Colonic mucosa (tissue), 4 donors: ENCODE measurements at regions of chr16 and their contacts with region 1.

Region 1: DNA sequence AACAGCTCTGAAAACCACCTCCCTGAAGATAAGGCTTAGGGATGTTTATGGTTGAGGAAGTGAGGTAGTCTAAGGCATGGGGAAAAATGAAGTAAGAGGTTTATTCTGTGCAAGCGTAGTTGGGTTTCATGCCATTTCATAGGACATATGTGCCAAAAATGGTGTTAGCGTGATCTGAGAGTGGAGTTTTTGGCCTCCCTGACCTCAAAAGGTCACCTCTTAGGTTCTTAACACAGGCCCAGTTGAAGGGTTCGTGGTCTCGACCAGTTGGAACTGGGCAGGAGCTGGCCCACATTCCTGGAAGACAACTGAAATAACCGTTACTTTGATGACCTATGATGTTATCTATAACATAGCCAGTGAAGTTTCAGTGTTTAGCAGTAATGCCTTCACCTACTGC is 57.0 kb downstream of the MRTFB start:
- DNase-seq: no peak
- H3K4me3 ChIP-seq: no peak overlapping the region
- H3K27ac ChIP-seq: no peak overlapping the region
- H3K4me1 ChIP-seq: no peaks in the 10 kb centered on the region
- H3K27me3 ChIP-seq: no peaks in the 10 kb centered on the region
- CTCF ChIP-seq: no peak

Region 2: GRCh38 chr16:14111713-14112540 is 16.2 kb before region 1 on chr16:
- intact Hi-C with region 1: loop called (anchors 2 kb)
- DNase-seq: peak; percentile 79
- H3K4me3 ChIP-seq: no peak overlapping the region
- H3K27ac ChIP-seq: peak overlapping the region; percentile 5
- H3K4me1 ChIP-seq: peaks cover 7% of the 10 kb centered on the region
- H3K27me3 ChIP-seq: no peaks in the 10 kb centered on the region
- CTCF ChIP-seq: no peak

Region 3: DNA sequence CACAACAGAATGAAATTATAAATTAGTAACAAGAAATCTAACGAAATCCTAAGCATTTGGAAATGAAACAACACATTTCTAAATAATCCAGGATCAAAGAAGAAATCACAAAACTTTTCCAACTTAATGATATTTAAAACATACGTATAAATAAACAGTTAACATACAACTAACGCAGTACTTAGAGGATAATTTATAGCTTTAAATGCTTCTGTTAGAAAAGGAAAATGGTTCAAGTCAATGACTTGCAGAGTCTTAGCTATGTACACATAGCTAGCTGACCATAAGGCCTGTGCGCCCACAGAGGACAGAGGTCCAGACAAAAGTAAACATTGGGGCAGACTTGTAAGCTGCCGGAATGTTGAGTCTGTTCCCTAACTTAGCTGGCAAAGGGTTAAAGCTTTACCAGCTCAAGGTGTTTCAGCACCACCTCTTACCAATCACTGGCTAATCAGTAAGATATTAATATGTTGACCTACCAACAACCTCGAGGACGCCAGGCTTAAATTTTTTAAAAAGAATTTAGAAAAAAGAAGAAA is 417.3 kb after region 1 on chr16:
- intact Hi-C with region 1: no loop called
- DNase-seq: no peak
- H3K4me3 ChIP-seq: no peak overlapping the region
- H3K27ac ChIP-seq: no peak overlapping the region
- H3K4me1 ChIP-seq: no peaks in the 10 kb centered on the region
- H3K27me3 ChIP-seq: no peaks in the 10 kb centered on the region
- CTCF ChIP-seq: no peak